ENCODE measurements at regions of chr5 and their contacts with region 1.

Region 1: GRCh38 chr5:58666598-58667581 is 84.0 kb downstream of the RAB3C start:
- DNase-seq: peak; percentile 95
- H3K4me3 ChIP-seq: no peak overlapping the region
- H3K27ac ChIP-seq: peak overlapping the region; percentile 90
- H3K4me1 ChIP-seq: peaks cover 49% of the 10 kb centered on the region
- H3K27me3 ChIP-seq: no peaks in the 10 kb centered on the region
- CTCF ChIP-seq: no peak
- POLR2A ChIP-seq: peak; percentile 68

Region 2: GRCh38 chr5:57841676-57842363 is 825.1 kb before region 1 on chr5:
- CTCF ChIA-PET with region 1: no interaction called
- POLR2A ChIA-PET with region 1: no interaction called
- dilution Hi-C with region 1: no loop called
- intact Hi-C with region 1: loop called (anchors 1 kb)
- DNase-seq: peak; percentile 96
- H3K4me3 ChIP-seq: no peak overlapping the region
- H3K27ac ChIP-seq: peak overlapping the region; percentile 90
- H3K4me1 ChIP-seq: peaks cover 66% of the 10 kb centered on the region
- H3K27me3 ChIP-seq: no peaks in the 10 kb centered on the region
- CTCF ChIP-seq: no peak
- POLR2A ChIP-seq: no peak

Region 3: DNA sequence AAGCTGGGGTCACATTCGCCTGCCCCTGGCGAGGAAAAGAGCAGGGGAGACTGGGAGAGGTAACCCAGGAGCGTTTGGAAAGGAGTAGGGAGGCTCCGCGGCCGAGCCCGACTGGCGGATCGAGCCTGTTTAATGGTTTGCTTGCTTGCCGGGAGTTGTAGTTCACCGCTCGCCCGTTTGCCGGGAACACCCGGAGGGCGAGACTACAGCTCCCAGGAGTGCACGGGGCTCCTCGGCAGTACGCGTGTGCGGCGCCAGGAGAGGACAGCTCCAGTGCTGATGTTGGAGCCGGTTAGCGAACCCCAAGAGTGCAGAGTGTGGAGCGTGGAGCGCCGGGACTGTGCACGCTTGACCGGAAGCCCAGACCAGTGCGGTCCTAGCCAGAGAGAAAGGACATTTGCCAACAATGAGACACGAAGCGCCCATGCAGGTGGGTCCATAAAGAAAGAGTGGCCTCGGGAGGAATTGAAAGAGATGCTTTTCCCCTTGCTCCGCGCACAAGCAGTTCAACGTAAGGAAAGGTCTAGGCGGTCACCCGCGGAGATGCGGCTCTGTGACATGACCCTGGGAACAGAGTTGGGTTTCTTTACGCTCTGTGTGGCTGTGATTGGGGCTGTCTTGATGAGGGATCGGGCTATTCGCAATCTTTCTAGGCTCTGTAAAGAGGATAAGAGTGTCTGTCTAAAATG is 83.9 kb before region 1 on chr5 and contains the start of gene RAB3C:
- CTCF ChIA-PET with region 1: interaction called, 11 read pairs
- POLR2A ChIA-PET with region 1: no interaction called
- dilution Hi-C with region 1: no loop called
- intact Hi-C with region 1: loop called (anchors 1 kb)
- DNase-seq: peak; percentile 97
- H3K4me3 ChIP-seq: peak within 1 kb of the TSS; percentile 45 to 93 (median 80)
- H3K27ac ChIP-seq: no peak within 1 kb of the TSS
- H3K4me1 ChIP-seq: peaks cover 15% of the 10 kb centered on the region
- H3K27me3 ChIP-seq: peaks cover 18 to 40% of the 10 kb centered on the region in 2 experiments
- CTCF ChIP-seq: no peak
- POLR2A ChIP-seq: no peak
- total RNA-seq, gene RAB3C: 0.04 TPM in 1 of 2 replicates, not detected in the other

Region 4: DNA sequence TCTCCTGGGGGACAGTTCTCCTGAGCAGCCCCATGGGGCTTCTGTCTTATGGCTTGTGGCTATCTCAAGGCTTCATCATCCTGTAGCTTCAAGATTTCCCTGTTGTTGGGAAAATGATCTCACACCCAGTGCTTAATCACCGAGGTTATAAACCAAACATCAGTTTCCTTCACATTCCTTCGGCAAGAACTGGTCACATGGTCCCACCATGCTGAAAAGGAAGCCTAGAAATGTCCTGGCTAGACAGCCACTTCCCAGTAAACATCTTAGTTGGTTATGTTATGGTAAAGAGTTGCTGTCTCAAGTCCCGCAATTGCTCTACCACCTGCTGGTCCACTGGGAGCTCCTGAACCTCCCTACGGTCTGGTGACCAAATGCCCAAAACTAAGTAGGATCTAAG is 18.0 kb before region 1 on chr5:
- CTCF ChIA-PET with region 1: interaction called, 11 read pairs
- POLR2A ChIA-PET with region 1: interaction called, 5 read pairs
- dilution Hi-C with region 1: no loop called
- intact Hi-C with region 1: loop called (anchors 1 kb)
- DNase-seq: peak; percentile 95
- H3K4me3 ChIP-seq: no peak overlapping the region
- H3K27ac ChIP-seq: peak overlapping the region; percentile 83
- H3K4me1 ChIP-seq: peaks cover 18% of the 10 kb centered on the region
- H3K27me3 ChIP-seq: no peaks in the 10 kb centered on the region
- CTCF ChIP-seq: no peak
- POLR2A ChIP-seq: no peak

Region 5: GRCh38 chr5:58680503-58680902 is 13.6 kb after region 1 on chr5:
- CTCF ChIA-PET with region 1: interaction called, 33 read pairs
- POLR2A ChIA-PET with region 1: interaction called, 7 read pairs
- dilution Hi-C with region 1: no loop called
- intact Hi-C with region 1: loop called (anchors 1 kb)
- DNase-seq: peak; percentile 85
- H3K4me3 ChIP-seq: no peak overlapping the region
- H3K27ac ChIP-seq: peak overlapping the region; percentile 72
- H3K4me1 ChIP-seq: peaks cover 68% of the 10 kb centered on the region
- H3K27me3 ChIP-seq: no peaks in the 10 kb centered on the region
- CTCF ChIP-seq: no peak
- POLR2A ChIP-seq: peak; percentile 70

Region 6: DNA sequence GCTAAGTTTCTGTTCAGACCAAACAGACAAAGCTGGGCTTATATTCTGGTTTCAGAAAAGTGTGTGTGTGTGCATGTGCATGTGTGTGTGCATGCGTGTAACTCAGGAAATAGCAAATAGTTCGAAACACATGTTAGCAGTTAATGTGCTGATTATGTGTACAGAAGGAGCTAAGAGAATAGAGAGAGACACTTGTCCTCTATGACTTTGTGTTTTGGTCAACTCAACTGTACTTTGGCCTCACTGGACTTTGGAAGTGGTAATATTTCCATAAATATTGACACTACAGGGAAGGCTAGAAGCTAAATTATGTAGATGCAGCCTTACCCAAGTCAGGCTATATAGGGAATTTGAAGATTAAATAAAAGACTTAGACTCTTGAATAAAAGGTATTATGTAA is 71.4 kb after region 1 on chr5:
- CTCF ChIA-PET with region 1: no interaction called
- POLR2A ChIA-PET with region 1: no interaction called
- dilution Hi-C with region 1: no loop called
- intact Hi-C with region 1: no loop called
- DNase-seq: no peak
- H3K4me3 ChIP-seq: no peak overlapping the region
- H3K27ac ChIP-seq: no peak overlapping the region
- H3K4me1 ChIP-seq: no peaks in the 10 kb centered on the region
- H3K27me3 ChIP-seq: no peaks in the 10 kb centered on the region
- CTCF ChIP-seq: no peak
- POLR2A ChIP-seq: no peak

Region 7: GRCh38 chr5:58751222-58751837 is 84.4 kb after region 1 on chr5:
- CTCF ChIA-PET with region 1: no interaction called
- POLR2A ChIA-PET with region 1: no interaction called
- dilution Hi-C with region 1: no loop called
- intact Hi-C with region 1: loop called (anchors 1 kb)
- DNase-seq: peak; percentile 82
- H3K4me3 ChIP-seq: no peak overlapping the region
- H3K27ac ChIP-seq: no peak overlapping the region
- H3K4me1 ChIP-seq: no peaks in the 10 kb centered on the region
- H3K27me3 ChIP-seq: no peaks in the 10 kb centered on the region
- CTCF ChIP-seq: no peak
- POLR2A ChIP-seq: no peak